B cell (primary cell): ENCODE measurements at regions of chr10 and their contacts with region 1.

Region 1: GRCh38 chr10:102420810-102421644 is at the start of gene FBXL15:
- DNase-seq: peak; percentile 98
- ATAC-seq: peak; percentile 78
- H3K4me3 ChIP-seq: peak within 1 kb of the TSS; percentile 63 to 92 (median 89)
- H3K4me3 Mint-ChIP-seq: peak within 1 kb of the TSS; percentile 99
- H3K27ac ChIP-seq: peak within 1 kb of the TSS; percentile 39 to 62
- H3K27ac Mint-ChIP-seq: peak within 1 kb of the TSS; percentile 99
- H3K4me1 ChIP-seq: peaks cover 32 to 34% of the 10 kb centered on the region in 2 donors
- H3K4me1 Mint-ChIP-seq: peaks cover 38% of the 10 kb centered on the region
- H3K27me3 ChIP-seq: peaks cover 0 to 33% (median 21%) of the 10 kb centered on the region in 4 experiments
- H3K27me3 Mint-ChIP-seq: peaks cover 16% of the 10 kb centered on the region
- CTCF ChIP-seq: no peak
- total RNA-seq, gene FBXL15: 15.5 and 17.0 TPM in 2 replicates

Region 2: GRCh38 chr10:102151774-102152544 is 269.1 kb before region 1 on chr10 and contains the start of gene NOLC1:
- CTCF ChIA-PET with region 1: interaction called, 3 read pairs
- POLR2A ChIA-PET with region 1: no interaction called
- intact Hi-C with region 1: loop called (anchors 2 kb)
- DNase-seq: peak; percentile 100
- ATAC-seq: peak; percentile 97
- H3K4me3 ChIP-seq: peak within 1 kb of the TSS; percentile 22 to 99 (median 96)
- H3K4me3 Mint-ChIP-seq: peak within 1 kb of the TSS; percentile 95
- H3K27ac ChIP-seq: peak within 1 kb of the TSS; percentile 85 to 93
- H3K27ac Mint-ChIP-seq: peak within 1 kb of the TSS; percentile 95
- H3K4me1 ChIP-seq: peaks cover 15 to 24% of the 10 kb centered on the region in 2 donors
- H3K4me1 Mint-ChIP-seq: peaks cover 36% of the 10 kb centered on the region
- H3K27me3 ChIP-seq: no peaks in the 10 kb centered on the region
- H3K27me3 Mint-ChIP-seq: no peaks in the 10 kb centered on the region
- CTCF ChIP-seq: no peak
- total RNA-seq, gene NOLC1: 45.0 and 50.2 TPM in 2 replicates

Region 3: DNA sequence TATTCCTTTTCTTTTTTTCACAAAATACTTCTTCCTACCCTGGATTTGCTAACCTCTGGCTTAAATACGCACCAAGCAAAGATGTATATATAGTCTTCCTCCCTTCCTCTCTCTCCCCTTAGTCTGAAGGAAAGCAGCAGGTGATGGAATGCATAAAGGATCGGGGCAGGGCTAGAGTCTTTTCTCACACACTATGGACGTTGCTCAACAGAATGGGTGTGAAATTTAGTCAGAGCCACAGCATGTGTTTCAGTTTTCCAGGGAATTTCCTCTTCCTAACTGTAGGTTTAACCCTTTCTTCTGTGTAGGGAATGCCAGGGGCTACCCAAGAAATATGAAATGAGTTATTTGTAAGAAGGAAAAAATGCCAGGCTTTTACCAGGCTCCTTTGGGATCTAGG is 97.0 kb before region 1 on chr10:
- CTCF ChIA-PET with region 1: no interaction called
- POLR2A ChIA-PET with region 1: no interaction called
- intact Hi-C with region 1: no loop called
- DNase-seq: no peak
- ATAC-seq: no peak
- H3K4me3 ChIP-seq: no peak overlapping the region
- H3K4me3 Mint-ChIP-seq: no peak overlapping the region
- H3K27ac ChIP-seq: no peak overlapping the region
- H3K27ac Mint-ChIP-seq: no peak overlapping the region
- H3K4me1 ChIP-seq: peaks cover 0 to 2% of the 10 kb centered on the region in 2 donors
- H3K4me1 Mint-ChIP-seq: peaks cover 33% of the 10 kb centered on the region
- H3K27me3 ChIP-seq: no peaks in the 10 kb centered on the region
- H3K27me3 Mint-ChIP-seq: no peaks in the 10 kb centered on the region
- CTCF ChIP-seq: no peak

Region 4: DNA sequence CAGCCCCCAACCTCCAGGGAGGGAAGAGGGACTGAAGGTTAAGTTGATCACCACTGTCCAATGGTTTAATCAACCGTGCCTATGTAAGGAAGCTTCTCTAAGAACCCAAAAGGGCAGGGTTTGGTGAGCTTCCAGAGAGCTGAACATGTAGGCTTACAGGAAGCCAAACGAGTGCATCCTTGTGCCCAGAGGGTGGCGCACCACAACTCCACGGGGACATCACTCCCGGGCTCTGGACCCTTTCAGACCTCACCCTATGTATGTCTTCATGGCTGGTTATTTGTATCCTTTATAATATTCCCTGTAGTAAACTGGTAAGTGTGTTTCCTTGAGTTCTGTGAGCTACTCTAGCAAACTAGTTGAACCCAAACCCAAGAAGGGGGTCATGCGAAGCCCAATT is 37.0 kb before region 1 on chr10:
- CTCF ChIA-PET with region 1: interaction called, 10 read pairs
- POLR2A ChIA-PET with region 1: no interaction called
- intact Hi-C with region 1: no loop called
- DNase-seq: no peak
- ATAC-seq: no peak
- H3K4me3 ChIP-seq: no peak overlapping the region
- H3K4me3 Mint-ChIP-seq: no peak overlapping the region
- H3K27ac ChIP-seq: no peak overlapping the region
- H3K27ac Mint-ChIP-seq: no peak overlapping the region
- H3K4me1 ChIP-seq: peaks cover 0 to 8% of the 10 kb centered on the region in 2 donors
- H3K4me1 Mint-ChIP-seq: peaks cover 12% of the 10 kb centered on the region
- H3K27me3 ChIP-seq: no peaks in the 10 kb centered on the region
- H3K27me3 Mint-ChIP-seq: no peaks in the 10 kb centered on the region
- CTCF ChIP-seq: no peak

Region 5: DNA sequence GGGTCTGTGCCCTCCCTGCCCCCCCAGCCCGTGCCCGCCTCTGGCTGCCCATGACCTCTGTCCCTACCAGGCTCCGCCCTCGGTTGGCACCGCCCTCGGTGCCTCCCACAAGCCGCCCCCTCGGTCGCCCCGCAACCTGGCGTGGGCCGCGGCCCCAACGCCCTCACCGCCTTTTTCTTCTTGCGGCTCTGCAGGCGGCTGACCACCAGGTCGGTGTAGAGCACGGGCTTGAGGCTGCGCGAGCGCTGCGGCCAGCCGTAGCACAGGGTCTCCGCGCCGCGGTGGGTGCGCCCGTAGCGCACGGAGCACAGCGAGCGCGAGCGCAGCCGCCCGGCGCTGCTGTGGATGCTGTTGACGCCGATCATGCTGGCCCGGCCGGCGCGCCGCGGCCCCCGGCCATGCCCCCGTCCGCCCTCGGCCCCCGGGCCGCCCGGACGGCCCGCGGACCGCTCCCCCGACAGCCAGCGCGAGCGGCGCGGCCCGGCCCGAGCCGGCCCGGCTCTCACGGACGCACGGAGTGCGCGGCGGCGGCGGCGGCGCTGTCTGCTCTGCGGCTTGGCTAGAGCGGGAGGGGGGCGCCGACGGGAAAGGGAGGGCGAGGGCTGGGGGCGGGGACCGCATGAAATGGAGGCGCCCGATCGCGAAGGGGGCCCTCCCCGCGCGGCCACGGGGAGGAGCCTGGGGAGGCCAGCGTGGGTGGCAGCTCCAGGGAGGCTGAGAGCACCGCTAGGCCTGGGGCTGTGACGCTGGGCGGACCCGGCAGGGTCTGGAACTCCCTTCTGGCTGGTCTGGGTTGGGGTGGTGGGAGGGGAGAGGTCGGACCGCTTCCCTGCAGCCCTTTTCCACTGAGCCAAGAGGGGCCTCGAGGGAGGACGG is 12.1 kb before region 1 on chr10:
- CTCF ChIA-PET with region 1: interaction called, 20 read pairs
- POLR2A ChIA-PET with region 1: interaction called, 14 read pairs
- intact Hi-C with region 1: no loop called
- DNase-seq: peak; percentile 64
- ATAC-seq: peak; percentile 49
- H3K4me3 ChIP-seq: peak overlapping the region in 3 of 5 experiments; percentile 8 to 40 (median 39)
- H3K4me3 Mint-ChIP-seq: peak overlapping the region; percentile 83
- H3K27ac ChIP-seq: no peak overlapping the region
- H3K27ac Mint-ChIP-seq: no peak overlapping the region
- H3K4me1 ChIP-seq: peaks cover 26 to 33% of the 10 kb centered on the region in 2 donors
- H3K4me1 Mint-ChIP-seq: peaks cover 31% of the 10 kb centered on the region
- H3K27me3 ChIP-seq: peaks cover 0 to 64% (median 35%) of the 10 kb centered on the region in 4 experiments
- H3K27me3 Mint-ChIP-seq: peaks cover 46% of the 10 kb centered on the region
- CTCF ChIP-seq: no peak

Region 6: DNA sequence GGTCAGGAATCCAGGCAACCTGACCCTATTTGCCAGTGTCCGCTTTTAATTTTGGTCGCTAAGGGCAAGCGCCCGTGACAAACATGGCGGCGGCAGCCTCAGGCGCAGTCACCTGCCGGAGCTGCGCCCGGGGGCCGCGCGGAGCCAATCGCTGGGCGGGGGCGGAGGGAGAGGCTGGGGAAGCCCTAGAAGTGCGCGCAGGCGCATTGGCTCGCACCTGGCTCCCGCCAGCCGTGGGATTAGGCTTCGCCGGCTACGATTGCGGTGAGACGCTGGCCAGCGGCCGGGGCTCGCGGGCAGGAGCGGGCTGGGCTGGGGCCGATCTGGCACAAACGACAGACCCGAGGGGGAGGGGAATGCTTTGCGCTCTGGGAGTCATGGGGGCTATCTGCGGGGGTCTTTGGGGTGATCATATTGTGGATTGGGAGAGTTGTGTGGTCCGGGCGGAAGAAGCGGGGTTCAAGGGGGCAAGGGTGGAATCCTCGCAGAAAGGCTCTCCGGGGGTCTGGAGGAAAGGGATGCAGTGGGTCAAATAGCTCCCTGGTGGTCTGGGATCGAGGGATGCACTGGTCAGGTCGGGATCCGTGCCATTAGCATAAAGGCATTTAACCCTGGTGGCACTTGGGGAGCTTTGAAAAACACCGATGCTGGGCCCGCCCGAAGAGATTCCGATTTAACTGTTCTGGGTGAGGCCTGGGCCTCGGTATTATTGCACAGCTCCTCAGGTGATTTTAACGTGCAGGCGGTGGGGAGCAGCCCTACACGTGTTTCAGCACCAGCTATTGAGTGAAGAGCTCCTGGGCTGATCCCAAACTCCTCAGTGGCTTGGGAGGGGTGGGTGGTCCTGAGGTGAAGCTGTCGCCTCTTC is 40.4 kb after region 1 on chr10:
- CTCF ChIA-PET with region 1: interaction called, 8 read pairs
- POLR2A ChIA-PET with region 1: interaction called, 4 read pairs
- intact Hi-C with region 1: loop called (anchors 1 kb)
- DNase-seq: peak; percentile 95
- ATAC-seq: peak; percentile 99
- H3K4me3 ChIP-seq: peak overlapping the region; percentile 34 to 76 (median 68)
- H3K4me3 Mint-ChIP-seq: peak overlapping the region; percentile 85
- H3K27ac ChIP-seq: peak overlapping the region; percentile 17 to 71
- H3K27ac Mint-ChIP-seq: peak overlapping the region; percentile 76
- H3K4me1 ChIP-seq: peaks cover 17 to 23% of the 10 kb centered on the region in 2 donors
- H3K4me1 Mint-ChIP-seq: peaks cover 29% of the 10 kb centered on the region
- H3K27me3 ChIP-seq: peaks cover 0 to 4% (median 0%) of the 10 kb centered on the region in 4 experiments
- H3K27me3 Mint-ChIP-seq: no peaks in the 10 kb centered on the region
- CTCF ChIP-seq: no peak

Region 7: DNA sequence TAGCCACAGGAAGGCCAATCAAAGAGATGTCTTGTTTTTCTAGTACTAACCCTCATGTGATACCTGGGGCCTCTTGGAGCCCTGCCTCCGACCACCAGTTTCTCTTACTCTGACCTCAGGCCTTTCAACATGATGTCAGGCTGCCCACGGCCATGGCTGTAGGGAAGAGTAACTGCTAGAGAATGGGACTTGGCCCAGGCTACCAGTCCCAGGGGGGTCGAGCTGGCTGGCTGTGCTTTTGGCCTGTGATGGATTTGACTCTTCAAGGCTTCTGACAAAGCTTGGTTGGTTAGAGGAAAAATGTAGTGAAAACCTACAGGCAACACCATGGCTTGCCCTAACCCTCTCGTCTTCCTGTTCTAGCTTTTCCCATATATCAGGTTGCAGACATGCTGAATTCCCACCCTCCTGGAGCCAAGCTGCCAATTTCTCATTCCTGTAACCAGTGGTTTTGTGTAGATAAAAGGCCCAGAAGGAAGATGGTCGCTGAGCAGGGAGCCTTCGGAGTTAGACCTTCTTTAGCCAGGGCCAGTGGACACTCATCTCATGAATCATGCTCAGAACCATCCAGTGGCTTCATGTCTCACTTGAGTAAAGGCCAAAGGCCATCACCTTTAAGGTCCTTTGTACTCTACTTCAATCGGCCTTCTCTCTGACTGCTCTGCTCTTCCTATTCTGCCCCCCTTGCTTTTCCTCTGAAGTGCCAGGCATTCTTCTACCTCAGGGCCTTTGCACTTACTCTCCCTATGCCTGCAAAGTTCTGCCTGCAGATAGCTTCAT is 102.4 kb after region 1 on chr10:
- CTCF ChIA-PET with region 1: no interaction called
- POLR2A ChIA-PET with region 1: no interaction called
- intact Hi-C with region 1: no loop called
- DNase-seq: no peak
- ATAC-seq: no peak
- H3K4me3 ChIP-seq: no peak overlapping the region
- H3K4me3 Mint-ChIP-seq: no peak overlapping the region
- H3K27ac ChIP-seq: no peak overlapping the region
- H3K27ac Mint-ChIP-seq: no peak overlapping the region
- H3K4me1 ChIP-seq: no peaks in the 10 kb centered on the region
- H3K4me1 Mint-ChIP-seq: no peaks in the 10 kb centered on the region
- H3K27me3 ChIP-seq: no peaks in the 10 kb centered on the region
- H3K27me3 Mint-ChIP-seq: no peaks in the 10 kb centered on the region
- CTCF ChIP-seq: no peak

Region 8: GRCh38 chr10:102959360-102959759 is 538.3 kb after region 1 on chr10:
- CTCF ChIA-PET with region 1: no interaction called
- POLR2A ChIA-PET with region 1: no interaction called
- intact Hi-C with region 1: no loop called
- DNase-seq: no peak
- ATAC-seq: no peak
- H3K4me3 ChIP-seq: no peak overlapping the region
- H3K4me3 Mint-ChIP-seq: no peak overlapping the region
- H3K27ac ChIP-seq: no peak overlapping the region
- H3K27ac Mint-ChIP-seq: no peak overlapping the region
- H3K4me1 ChIP-seq: no peaks in the 10 kb centered on the region
- H3K4me1 Mint-ChIP-seq: no peaks in the 10 kb centered on the region
- H3K27me3 ChIP-seq: no peaks in the 10 kb centered on the region
- H3K27me3 Mint-ChIP-seq: no peaks in the 10 kb centered on the region
- CTCF ChIP-seq: no peak